Transverse colon (tissue), 4 donors: ENCODE measurements at regions of chr16 and their contacts with region 1.

Region 1: GRCh38 chr16:83285921-83286320 is 521.9 kb upstream of the HSBP1 start:
- DNase-seq: no peak
- H3K4me3 ChIP-seq: no peak overlapping the region
- H3K27ac ChIP-seq: no peak overlapping the region
- H3K4me1 ChIP-seq: no peaks in the 10 kb centered on the region
- H3K27me3 ChIP-seq: no peaks in the 10 kb centered on the region
- CTCF ChIP-seq: no peak
- EP300 ChIP-seq: no peak
- POLR2A ChIP-seq: no peak

Region 2: GRCh38 chr16:82728901-82729300 is 557.0 kb before region 1 on chr16:
- in situ Hi-C with region 1: no loop called
- intact Hi-C with region 1: no loop called
- DNase-seq: no peak
- H3K4me3 ChIP-seq: no peak overlapping the region
- H3K27ac ChIP-seq: no peak overlapping the region
- H3K4me1 ChIP-seq: no peaks in the 10 kb centered on the region
- H3K27me3 ChIP-seq: no peaks in the 10 kb centered on the region
- CTCF ChIP-seq: no peak
- EP300 ChIP-seq: no peak
- POLR2A ChIP-seq: no peak

Region 3: GRCh38 chr16:83298541-83298940 is 12.6 kb after region 1 on chr16:
- in situ Hi-C with region 1: no loop called
- intact Hi-C with region 1: loop called (anchors 2 kb)
- DNase-seq: no peak
- H3K4me3 ChIP-seq: no peak overlapping the region
- H3K27ac ChIP-seq: no peak overlapping the region
- H3K4me1 ChIP-seq: no peaks in the 10 kb centered on the region
- H3K27me3 ChIP-seq: no peaks in the 10 kb centered on the region
- CTCF ChIP-seq: no peak
- EP300 ChIP-seq: no peak
- POLR2A ChIP-seq: no peak